Activated CD8-positive, alpha-beta T cell treated with anti-CD3 and anti-CD28 coated beads for 36 hours (primary cell): ENCODE measurements at regions of chr9 and their contacts with region 1.

Region 1: GRCh38 chr9:124852829-124853531 is at the start of gene WDR38:
- DNase-seq: peak; percentile 91
- ATAC-seq: peak; percentile 81
- H3K4me3 Mint-ChIP-seq: peak within 1 kb of the TSS; percentile 46
- H3K27ac Mint-ChIP-seq: no peak within 1 kb of the TSS
- H3K4me1 Mint-ChIP-seq: peaks cover 20% of the 10 kb centered on the region
- H3K27me3 Mint-ChIP-seq: peaks cover 19% of the 10 kb centered on the region
- CTCF ChIP-seq: peak; percentile 100
- total RNA-seq, gene WDR38: not detected

Region 2: DNA sequence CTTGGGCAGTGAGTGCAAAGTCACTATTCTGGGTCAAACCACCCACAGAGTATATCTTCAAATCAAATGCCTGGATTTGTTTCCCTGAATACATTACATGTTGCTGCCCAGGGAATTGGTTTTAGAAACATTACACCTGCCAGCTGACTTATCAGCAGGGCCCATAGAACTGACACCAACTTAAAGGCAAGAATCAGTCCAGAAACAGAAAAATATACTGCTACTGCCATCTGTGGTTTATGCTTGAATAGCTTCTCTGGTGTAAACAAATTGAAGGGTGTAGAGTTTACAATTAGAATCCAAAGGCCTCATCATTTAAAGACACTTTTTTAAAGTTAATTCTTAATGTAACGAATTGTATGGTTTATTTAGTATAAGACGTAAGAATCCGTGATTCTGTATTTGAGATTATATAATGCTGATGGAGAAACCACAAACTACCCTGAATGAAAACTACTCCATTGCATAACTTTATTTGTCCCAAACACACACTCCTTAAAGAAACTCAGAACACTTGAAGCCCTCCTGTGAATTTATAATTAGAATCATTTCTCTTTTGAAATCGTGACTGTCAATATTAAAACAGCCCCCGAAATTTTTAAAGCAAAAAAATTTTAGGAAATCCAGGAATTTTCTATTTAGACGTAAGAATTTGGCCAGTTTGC is 88.1 kb before region 1 on chr9:
- CTCF ChIA-PET with region 1: interaction called, 431 read pairs
- POLR2A ChIA-PET with region 1: interaction called, 120 read pairs
- intact Hi-C with region 1: no loop called
- DNase-seq: no peak
- ATAC-seq: no peak
- H3K4me3 Mint-ChIP-seq: no peak overlapping the region
- H3K27ac Mint-ChIP-seq: no peak overlapping the region
- H3K4me1 Mint-ChIP-seq: peaks cover 9% of the 10 kb centered on the region
- H3K27me3 Mint-ChIP-seq: peaks cover 66% of the 10 kb centered on the region
- CTCF ChIP-seq: no peak

Region 3: GRCh38 chr9:124786881-124787573 is 66.0 kb before region 1 on chr9:
- CTCF ChIA-PET with region 1: interaction called, 18 read pairs
- POLR2A ChIA-PET with region 1: no interaction called
- intact Hi-C with region 1: no loop called
- DNase-seq: no peak
- ATAC-seq: no peak
- H3K4me3 Mint-ChIP-seq: no peak overlapping the region
- H3K27ac Mint-ChIP-seq: no peak overlapping the region
- H3K4me1 Mint-ChIP-seq: no peaks in the 10 kb centered on the region
- H3K27me3 Mint-ChIP-seq: peaks cover 1% of the 10 kb centered on the region
- CTCF ChIP-seq: no peak

Region 4: GRCh38 chr9:124839612-124840299 is 13.2 kb before region 1 on chr9:
- CTCF ChIA-PET with region 1: interaction called, 57 read pairs
- POLR2A ChIA-PET with region 1: interaction called, 3 read pairs
- intact Hi-C with region 1: no loop called
- DNase-seq: no peak
- ATAC-seq: peak; percentile 62
- H3K4me3 Mint-ChIP-seq: no peak overlapping the region
- H3K27ac Mint-ChIP-seq: no peak overlapping the region
- H3K4me1 Mint-ChIP-seq: no peaks in the 10 kb centered on the region
- H3K27me3 Mint-ChIP-seq: peaks cover 15% of the 10 kb centered on the region
- CTCF ChIP-seq: no peak

Region 5: DNA sequence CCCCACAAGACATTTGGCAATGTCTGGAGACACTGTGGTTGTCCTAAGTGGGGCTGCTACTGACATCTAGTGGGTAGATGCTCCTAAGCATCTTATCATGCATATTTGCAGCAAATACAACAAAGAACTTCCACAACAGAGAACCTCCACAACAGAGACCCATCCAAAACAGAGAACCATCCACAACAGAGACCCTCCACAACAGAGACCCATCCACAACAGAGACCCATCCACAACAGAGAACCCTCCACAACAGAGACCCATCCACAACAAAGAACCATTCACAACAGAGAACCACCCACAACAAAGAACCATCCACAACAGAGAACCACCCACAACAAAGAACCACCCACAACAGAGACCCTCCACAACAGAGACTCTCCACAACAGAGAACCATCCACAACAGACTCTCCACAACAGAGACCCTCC is 41.8 kb after region 1 on chr9:
- CTCF ChIA-PET with region 1: interaction called, 17 read pairs
- POLR2A ChIA-PET with region 1: interaction called, 3 read pairs
- intact Hi-C with region 1: no loop called
- DNase-seq: peak; percentile 58
- ATAC-seq: peak; percentile 84
- H3K4me3 Mint-ChIP-seq: no peak overlapping the region
- H3K27ac Mint-ChIP-seq: no peak overlapping the region
- H3K4me1 Mint-ChIP-seq: peaks cover 7% of the 10 kb centered on the region
- H3K27me3 Mint-ChIP-seq: peaks cover 2% of the 10 kb centered on the region
- CTCF ChIP-seq: peak; percentile 28